ENCODE measurements at regions of chr18 and their contacts with region 1.

Region 1: GRCh38 chr18:293536-293935 is 25.7 kb upstream of the THOC1 start:
- DNase-seq: peak; percentile 33
- H3K4me3 ChIP-seq: no peak overlapping the region
- H3K27ac ChIP-seq: no peak overlapping the region
- H3K4me1 ChIP-seq: peaks cover 11% of the 10 kb centered on the region
- H3K27me3 ChIP-seq: no peaks in the 10 kb centered on the region
- CTCF ChIP-seq: no peak
- POLR2A ChIP-seq: no peak

Region 2: GRCh38 chr18:305003-305501 is 11.5 kb after region 1 on chr18:
- CTCF ChIA-PET with region 1: interaction called, 10 read pairs
- POLR2A ChIA-PET with region 1: no interaction called
- dilution Hi-C with region 1: no loop called
- intact Hi-C with region 1: no loop called
- DNase-seq: no peak
- H3K4me3 ChIP-seq: no peak overlapping the region
- H3K27ac ChIP-seq: no peak overlapping the region
- H3K4me1 ChIP-seq: peaks cover 6% of the 10 kb centered on the region
- H3K27me3 ChIP-seq: peaks cover 0 to 9% of the 10 kb centered on the region in 2 experiments
- CTCF ChIP-seq: no peak
- POLR2A ChIP-seq: no peak

Measured in endothelial cell of umbilical vein (primary cell).